Heart right ventricle (tissue), 16 donors: ENCODE measurements at regions of chr6 and their contacts with region 1.

Region 1: DNA sequence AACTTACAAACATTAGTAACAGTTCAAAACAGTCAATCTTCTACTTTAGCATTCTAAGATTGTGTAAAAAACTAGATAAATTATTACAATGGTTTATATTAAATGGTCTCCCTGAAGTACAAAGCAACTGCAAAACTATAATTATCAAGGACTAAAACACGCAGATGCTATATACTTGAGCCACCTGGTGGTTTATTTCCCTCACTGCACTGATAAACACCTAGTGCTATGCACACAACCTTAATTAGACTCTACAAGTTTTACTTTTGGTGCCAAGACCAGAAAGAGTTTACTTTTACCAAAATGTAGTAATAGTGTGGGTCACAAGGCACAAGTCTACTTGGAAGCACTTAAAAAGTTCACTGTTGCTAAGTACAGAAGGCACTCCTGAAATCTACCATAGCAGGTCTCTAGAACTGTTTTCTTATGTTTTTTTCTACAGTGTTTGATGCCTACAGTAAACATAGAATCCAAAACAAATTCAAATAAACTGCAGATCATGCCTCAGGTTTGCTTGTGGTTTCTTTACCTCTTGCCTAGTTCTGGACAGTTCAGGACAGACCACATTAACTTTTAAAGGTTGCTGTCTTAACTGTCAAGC is 49.2 kb downstream of the GMDS start:
- DNase-seq: peak in 1 of 2 donors; percentile 42
- ATAC-seq: peak in 7 of 8 donors; percentile 61 to 85 (median 75)
- H3K4me3 ChIP-seq: no peak overlapping the region
- H3K27ac ChIP-seq: peak overlapping the region in 1 of 10 donors; percentile 18
- H3K4me1 ChIP-seq: peaks cover 0 to 22% (median 13%) of the 10 kb centered on the region in 9 donors
- H3K27me3 ChIP-seq: no peaks in the 10 kb centered on the region
- CTCF ChIP-seq: peak; percentile 67 to 87 (median 81)

Region 2: GRCh38 chr6:1596088-1596852 is 599.9 kb before region 1 on chr6:
- intact Hi-C with region 1: loop called in 6 of 10 experiments (anchors 1 to 5 kb)
- DNase-seq: peak; percentile 58 to 61
- ATAC-seq: peak; percentile 73 to 90 (median 82)
- H3K4me3 ChIP-seq: peak overlapping the region in 9 of 10 donors; percentile 7 to 47 (median 33)
- H3K27ac ChIP-seq: no peak overlapping the region
- H3K4me1 ChIP-seq: peaks cover 0 to 11% (median 7%) of the 10 kb centered on the region in 9 donors
- H3K27me3 ChIP-seq: peaks cover 4 to 81% (median 52%) of the 10 kb centered on the region in 7 donors
- CTCF ChIP-seq: peak; percentile 86 to 98 (median 94)

Region 3: GRCh38 chr6:1604158-1605030 is 591.8 kb before region 1 on chr6:
- intact Hi-C with region 1: loop called in 9 of 10 experiments (anchors 1 to 5 kb)
- DNase-seq: peak in 1 of 2 donors; percentile 80
- ATAC-seq: peak; percentile 90 to 94 (median 92)
- H3K4me3 ChIP-seq: peak overlapping the region; percentile 0 to 66 (median 58)
- H3K27ac ChIP-seq: no peak overlapping the region
- H3K4me1 ChIP-seq: peaks cover 3 to 46% (median 22%) of the 10 kb centered on the region in 9 donors
- H3K27me3 ChIP-seq: peaks cover 16 to 99% (median 79%) of the 10 kb centered on the region in 7 donors
- CTCF ChIP-seq: peak; percentile 89 to 99 (median 98)

Region 4: GRCh38 chr6:1767481-1768251 is 428.5 kb before region 1 on chr6:
- intact Hi-C with region 1: no loop called
- DNase-seq: peak in 1 of 2 donors; percentile 49
- ATAC-seq: peak; percentile 85 to 96 (median 90)
- H3K4me3 ChIP-seq: no peak overlapping the region
- H3K27ac ChIP-seq: no peak overlapping the region
- H3K4me1 ChIP-seq: peaks cover 6 to 48% (median 27%) of the 10 kb centered on the region in 9 donors
- H3K27me3 ChIP-seq: no peaks in the 10 kb centered on the region
- CTCF ChIP-seq: no peak

Region 5: GRCh38 chr6:2103644-2104523 is 92.3 kb before region 1 on chr6:
- intact Hi-C with region 1: loop called in 4 of 10 experiments (anchors 2 to 10 kb)
- DNase-seq: no peak
- ATAC-seq: peak in 7 of 8 donors; percentile 75 to 83 (median 79)
- H3K4me3 ChIP-seq: peak overlapping the region in 4 of 10 donors; percentile 5 to 26 (median 14)
- H3K27ac ChIP-seq: peak overlapping the region in 2 of 10 donors; percentile 17 to 24
- H3K4me1 ChIP-seq: peaks cover 0 to 10% (median 0%) of the 10 kb centered on the region in 9 donors
- H3K27me3 ChIP-seq: no peaks in the 10 kb centered on the region
- CTCF ChIP-seq: peak in 8 of 9 donors; percentile 30 to 77 (median 65)

Region 6: DNA sequence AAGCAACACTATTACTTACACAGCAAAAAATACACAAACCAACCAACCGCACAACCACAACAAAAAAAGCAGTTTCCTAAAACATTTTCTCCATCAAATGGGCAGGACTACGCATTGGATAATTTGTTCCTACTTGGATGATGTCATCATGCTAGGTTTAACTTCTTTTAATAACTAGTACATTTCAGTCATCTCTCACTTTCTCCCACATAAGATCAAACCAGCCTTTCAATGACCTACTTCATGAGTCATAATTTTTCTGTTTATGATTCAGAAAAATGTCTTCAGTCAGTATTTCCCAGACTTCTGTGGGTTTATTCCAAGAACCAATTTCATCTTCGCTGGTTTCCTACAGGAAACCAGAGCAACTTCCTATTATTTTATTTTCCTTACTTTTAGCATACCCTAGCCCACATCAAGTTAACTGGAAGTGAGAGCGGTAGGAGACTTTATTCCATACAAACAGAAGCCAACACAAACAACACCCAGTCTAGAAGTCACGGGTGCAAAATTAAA is 85.0 kb before region 1 on chr6:
- intact Hi-C with region 1: loop called in 4 of 10 experiments (anchors 5 to 10 kb)
- DNase-seq: no peak
- ATAC-seq: peak in 6 of 8 donors; percentile 47 to 77 (median 72)
- H3K4me3 ChIP-seq: peak overlapping the region in 3 of 10 donors; percentile 10 to 18 (median 13)
- H3K27ac ChIP-seq: peak overlapping the region in 6 of 10 donors; percentile 5 to 79 (median 46)
- H3K4me1 ChIP-seq: peaks cover 0 to 20% (median 8%) of the 10 kb centered on the region in 9 donors
- H3K27me3 ChIP-seq: no peaks in the 10 kb centered on the region
- CTCF ChIP-seq: no peak

Region 7: DNA sequence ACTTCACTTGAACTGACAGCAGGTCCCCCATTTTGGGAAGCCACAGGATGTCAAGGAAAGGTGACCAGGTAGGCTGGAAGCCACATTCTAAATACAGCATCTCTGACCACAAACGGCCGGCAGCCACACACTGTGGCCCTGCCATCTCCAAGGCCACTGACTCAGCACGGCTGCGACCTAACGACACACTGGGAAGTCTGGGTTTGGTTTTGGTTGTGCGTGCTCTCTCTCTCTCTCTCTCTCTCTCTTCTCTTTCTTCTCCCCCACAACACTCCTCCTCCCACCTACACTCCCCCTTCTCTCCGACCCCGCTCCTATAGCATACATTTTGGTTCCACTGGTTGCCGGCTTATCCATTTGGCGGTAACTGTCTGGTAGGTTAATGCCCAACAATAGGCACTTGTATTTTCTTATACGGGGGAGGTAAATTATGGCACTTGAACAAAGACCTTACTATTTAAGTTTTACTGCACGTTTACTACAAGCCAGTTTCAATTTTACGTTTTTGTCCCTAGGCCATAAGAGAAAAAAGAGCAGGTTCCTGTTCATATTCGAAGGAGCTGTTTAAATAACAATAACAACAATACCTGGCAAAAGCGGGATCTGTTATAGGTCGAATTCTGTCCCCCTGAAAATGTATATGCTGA is 54.4 kb before region 1 on chr6:
- intact Hi-C with region 1: loop called in 1 of 10 experiments (anchors 2 kb)
- DNase-seq: no peak
- ATAC-seq: no peak
- H3K4me3 ChIP-seq: no peak overlapping the region
- H3K27ac ChIP-seq: no peak overlapping the region
- H3K4me1 ChIP-seq: no peaks in the 10 kb centered on the region
- H3K27me3 ChIP-seq: no peaks in the 10 kb centered on the region
- CTCF ChIP-seq: no peak

Region 8: DNA sequence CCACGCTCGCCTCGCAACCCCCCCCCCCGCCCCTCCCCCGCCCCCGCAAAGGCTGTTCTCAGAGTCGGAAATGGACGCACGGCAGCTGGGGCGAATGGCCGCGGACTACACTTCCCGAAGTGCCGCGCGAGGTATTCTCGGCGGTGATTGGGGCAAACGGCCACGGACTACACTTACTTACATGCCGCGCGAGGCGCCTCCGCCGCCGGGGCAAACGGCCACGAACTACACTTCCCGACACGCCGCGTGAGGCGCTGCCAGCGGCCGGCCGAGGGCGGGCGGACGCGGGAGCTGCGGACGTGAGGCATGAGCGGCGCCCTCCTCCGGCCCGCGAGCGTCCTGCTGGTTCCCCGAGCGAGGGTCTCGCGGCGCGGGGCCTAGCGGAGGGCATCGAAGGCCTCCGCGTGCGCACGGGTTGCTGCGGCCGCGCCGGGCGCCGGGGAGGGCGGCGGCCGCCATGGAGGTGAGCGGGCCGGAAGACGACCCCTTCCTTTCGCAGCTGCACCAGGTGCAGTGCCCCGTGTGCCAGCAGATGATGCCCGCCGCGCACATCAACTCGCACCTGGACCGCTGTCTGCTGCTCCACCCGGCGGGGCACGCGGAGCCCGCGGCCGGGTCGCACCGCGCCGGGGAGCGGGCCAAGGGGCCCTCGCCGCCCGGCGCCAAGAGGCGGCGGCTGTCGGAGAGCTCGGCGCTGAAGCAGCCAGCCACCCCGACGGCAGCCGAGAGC is 569.2 kb after region 1 on chr6 and contains the start of gene WRNIP1:
- intact Hi-C with region 1: loop called in 1 of 10 experiments (anchors 5 kb)
- DNase-seq: peak; percentile 98 to 99
- ATAC-seq: peak; percentile 93 to 96 (median 94)
- H3K4me3 ChIP-seq: peak within 1 kb of the TSS; percentile 69 to 94 (median 88)
- H3K27ac ChIP-seq: peak within 1 kb of the TSS; percentile 91 to 99 (median 97)
- H3K4me1 ChIP-seq: peaks cover 2 to 57% (median 40%) of the 10 kb centered on the region in 9 donors
- H3K27me3 ChIP-seq: no peaks in the 10 kb centered on the region
- CTCF ChIP-seq: peak; percentile 38 to 84 (median 73)
- total RNA-seq, gene WRNIP1: 29.7 to 41.7 (median 35.4) TPM